GM12878 (cell line): ENCODE measurements at regions of chr4 and their contacts with region 1.

Region 1: DNA sequence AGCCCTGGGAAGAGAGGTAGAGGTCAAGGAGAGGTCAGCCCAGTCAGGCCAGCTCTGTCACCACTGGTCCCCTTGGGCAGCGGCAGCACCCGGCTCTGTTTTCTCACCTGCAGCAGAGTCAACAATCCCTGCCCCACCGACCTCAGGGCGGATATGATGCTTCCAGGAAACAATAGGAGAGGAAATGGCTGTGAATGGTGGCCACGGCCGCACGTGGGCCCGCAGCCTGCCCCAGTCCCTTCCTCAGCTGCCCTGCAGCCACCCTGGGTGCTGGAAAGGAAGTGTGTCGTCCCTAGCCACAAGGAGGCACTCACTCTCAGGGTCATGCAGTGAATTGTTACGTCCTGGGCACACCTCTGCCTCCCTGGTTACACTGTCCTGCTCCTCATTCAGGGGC is 92.5 kb upstream of the ENPP6 start:
- DNase-seq: no peak
- ATAC-seq: peak; percentile 61
- H3K4me3 ChIP-seq: peak overlapping the region; percentile 75; the same call in 1 of the 2 replicates
- H3K27ac ChIP-seq: peak overlapping the region; percentile 94
- H3K4me1 ChIP-seq: peaks cover 47% of the 10 kb centered on the region
- H3K27me3 ChIP-seq: no peaks in the 10 kb centered on the region
- CTCF ChIP-seq: peak; percentile 49 to 59 (median 49)
- EP300 ChIP-seq: no peak
- POLR2A ChIP-seq: peak; percentile 33; the same call in 1 of the 2 replicates
- RAD21 ChIP-seq: peak; percentile 65

Region 2: GRCh38 chr4:184168406-184169019 is 141.7 kb before region 1 on chr4:
- CTCF ChIA-PET with region 1: no interaction called
- POLR2A ChIA-PET with region 1: no interaction called
- RAD21 ChIA-PET with region 1: no interaction called
- SMC1A ChIA-PET with region 1: no interaction called
- in situ Hi-C with region 1: no loop called
- intact Hi-C with region 1: no loop called
- DNase-seq: no peak
- ATAC-seq: peak; percentile 99
- H3K4me3 ChIP-seq: no peak overlapping the region
- H3K27ac ChIP-seq: no peak overlapping the region
- H3K4me1 ChIP-seq: no peaks in the 10 kb centered on the region
- H3K27me3 ChIP-seq: no peaks in the 10 kb centered on the region; a peak in 3 of 4 replicates
- CTCF ChIP-seq: peak; percentile 84 to 99 (median 91)
- EP300 ChIP-seq: no peak
- POLR2A ChIP-seq: no peak
- RAD21 ChIP-seq: peak; percentile 66

Region 3: GRCh38 chr4:184193556-184194525 is 116.3 kb before region 1 on chr4:
- CTCF ChIA-PET with region 1: no interaction called
- POLR2A ChIA-PET with region 1: no interaction called
- RAD21 ChIA-PET with region 1: no interaction called
- SMC1A ChIA-PET with region 1: no interaction called
- in situ Hi-C with region 1: no loop called
- intact Hi-C with region 1: no loop called
- DNase-seq: no peak
- ATAC-seq: no peak
- H3K4me3 ChIP-seq: no peak overlapping the region
- H3K27ac ChIP-seq: no peak overlapping the region
- H3K4me1 ChIP-seq: no peaks in the 10 kb centered on the region
- H3K27me3 ChIP-seq: no peaks in the 10 kb centered on the region; a peak in 1 of 4 replicates
- CTCF ChIP-seq: no peak
- EP300 ChIP-seq: no peak
- POLR2A ChIP-seq: no peak
- RAD21 ChIP-seq: no peak

Region 4: GRCh38 chr4:184287697-184288255 is 22.4 kb before region 1 on chr4:
- CTCF ChIA-PET with region 1: interaction called, 83 read pairs
- POLR2A ChIA-PET with region 1: interaction called, 149 read pairs
- RAD21 ChIA-PET with region 1: interaction called, 149 read pairs
- SMC1A ChIA-PET with region 1: interaction called, 150 read pairs
- in situ Hi-C with region 1: no loop called
- intact Hi-C with region 1: loop called (anchors 1 kb)
- DNase-seq: no peak
- ATAC-seq: peak; percentile 4; the same call in 1 of the 3 replicates
- H3K4me3 ChIP-seq: peak overlapping the region; percentile 55
- H3K27ac ChIP-seq: peak overlapping the region; percentile 99
- H3K4me1 ChIP-seq: peaks cover 64% of the 10 kb centered on the region
- H3K27me3 ChIP-seq: no peaks in the 10 kb centered on the region
- CTCF ChIP-seq: peak in 2 of 3 experiments; percentile 13 to 27; a peak in 3 of 6 replicates
- EP300 ChIP-seq: no peak
- POLR2A ChIP-seq: 0 out of 2 replicates have a peak, but pooled peaks have one; percentile 20
- RAD21 ChIP-seq: peak; percentile 53

Region 5: GRCh38 chr4:184298254-184298653 is 11.9 kb before region 1 on chr4:
- CTCF ChIA-PET with region 1: interaction called, 6 read pairs
- POLR2A ChIA-PET with region 1: interaction called, 6 read pairs
- RAD21 ChIA-PET with region 1: interaction called, 4 read pairs
- SMC1A ChIA-PET with region 1: interaction called, 12 read pairs
- in situ Hi-C with region 1: no loop called
- intact Hi-C with region 1: no loop called
- DNase-seq: no peak
- ATAC-seq: peak; percentile 31; the same call in 1 of the 3 replicates
- H3K4me3 ChIP-seq: no peak overlapping the region
- H3K27ac ChIP-seq: no peak overlapping the region
- H3K4me1 ChIP-seq: peaks cover 4% of the 10 kb centered on the region; the same call in 1 of the 2 replicates
- H3K27me3 ChIP-seq: no peaks in the 10 kb centered on the region
- CTCF ChIP-seq: no peak
- EP300 ChIP-seq: no peak
- POLR2A ChIP-seq: no peak
- RAD21 ChIP-seq: no peak

Region 6: GRCh38 chr4:184329659-184330400 is 19.7 kb after region 1 on chr4:
- CTCF ChIA-PET with region 1: interaction called, 100 read pairs
- POLR2A ChIA-PET with region 1: interaction called, 202 read pairs
- RAD21 ChIA-PET with region 1: interaction called, 194 read pairs
- SMC1A ChIA-PET with region 1: interaction called, 218 read pairs
- in situ Hi-C with region 1: no loop called
- intact Hi-C with region 1: loop called (anchors 1 kb)
- DNase-seq: peak; percentile 90
- ATAC-seq: peak; percentile 81
- H3K4me3 ChIP-seq: no peak overlapping the region
- H3K27ac ChIP-seq: peak overlapping the region; percentile 90
- H3K4me1 ChIP-seq: peaks cover 44% of the 10 kb centered on the region
- H3K27me3 ChIP-seq: no peaks in the 10 kb centered on the region
- CTCF ChIP-seq: no peak; a peak in 2 of 6 replicates
- EP300 ChIP-seq: peak; percentile 98 to 100
- POLR2A ChIP-seq: peak; percentile 53; the same call in 1 of the 2 replicates
- RAD21 ChIP-seq: peak; percentile 28; the same call in 1 of the 2 replicates

Region 7: GRCh38 chr4:184355111-184355604 is 45.0 kb after region 1 on chr4:
- CTCF ChIA-PET with region 1: interaction called, 105 read pairs
- POLR2A ChIA-PET with region 1: interaction called, 213 read pairs
- RAD21 ChIA-PET with region 1: interaction called, 323 read pairs
- SMC1A ChIA-PET with region 1: interaction called, 270 read pairs
- in situ Hi-C with region 1: no loop called
- intact Hi-C with region 1: loop called (anchors 1 kb)
- DNase-seq: peak; percentile 84
- ATAC-seq: peak; percentile 15
- H3K4me3 ChIP-seq: no peak overlapping the region
- H3K27ac ChIP-seq: peak overlapping the region; percentile 99
- H3K4me1 ChIP-seq: peaks cover 16% of the 10 kb centered on the region
- H3K27me3 ChIP-seq: no peaks in the 10 kb centered on the region
- CTCF ChIP-seq: no peak
- EP300 ChIP-seq: peak; percentile 52 to 63; a peak in 2 of 4 replicates
- POLR2A ChIP-seq: no peak
- RAD21 ChIP-seq: peak; percentile 28

Region 8: GRCh38 chr4:184395971-184396391 is 85.8 kb after region 1 on chr4:
- CTCF ChIA-PET with region 1: no interaction called
- POLR2A ChIA-PET with region 1: interaction called, 3 read pairs
- RAD21 ChIA-PET with region 1: interaction called, 3 read pairs
- SMC1A ChIA-PET with region 1: interaction called, 10 read pairs
- in situ Hi-C with region 1: no loop called
- intact Hi-C with region 1: loop called (anchors 5 kb)
- DNase-seq: peak; percentile 81
- ATAC-seq: peak; percentile 89
- H3K4me3 ChIP-seq: peak overlapping the region; percentile 29
- H3K27ac ChIP-seq: peak overlapping the region; percentile 76
- H3K4me1 ChIP-seq: peaks cover 29% of the 10 kb centered on the region
- H3K27me3 ChIP-seq: no peaks in the 10 kb centered on the region
- CTCF ChIP-seq: no peak
- EP300 ChIP-seq: no peak
- POLR2A ChIP-seq: peak; percentile 63; the same call in 1 of the 2 replicates
- RAD21 ChIP-seq: no peak